ENCODE measurements at regions of chr20 and their contacts with region 1.

Region 1: DNA sequence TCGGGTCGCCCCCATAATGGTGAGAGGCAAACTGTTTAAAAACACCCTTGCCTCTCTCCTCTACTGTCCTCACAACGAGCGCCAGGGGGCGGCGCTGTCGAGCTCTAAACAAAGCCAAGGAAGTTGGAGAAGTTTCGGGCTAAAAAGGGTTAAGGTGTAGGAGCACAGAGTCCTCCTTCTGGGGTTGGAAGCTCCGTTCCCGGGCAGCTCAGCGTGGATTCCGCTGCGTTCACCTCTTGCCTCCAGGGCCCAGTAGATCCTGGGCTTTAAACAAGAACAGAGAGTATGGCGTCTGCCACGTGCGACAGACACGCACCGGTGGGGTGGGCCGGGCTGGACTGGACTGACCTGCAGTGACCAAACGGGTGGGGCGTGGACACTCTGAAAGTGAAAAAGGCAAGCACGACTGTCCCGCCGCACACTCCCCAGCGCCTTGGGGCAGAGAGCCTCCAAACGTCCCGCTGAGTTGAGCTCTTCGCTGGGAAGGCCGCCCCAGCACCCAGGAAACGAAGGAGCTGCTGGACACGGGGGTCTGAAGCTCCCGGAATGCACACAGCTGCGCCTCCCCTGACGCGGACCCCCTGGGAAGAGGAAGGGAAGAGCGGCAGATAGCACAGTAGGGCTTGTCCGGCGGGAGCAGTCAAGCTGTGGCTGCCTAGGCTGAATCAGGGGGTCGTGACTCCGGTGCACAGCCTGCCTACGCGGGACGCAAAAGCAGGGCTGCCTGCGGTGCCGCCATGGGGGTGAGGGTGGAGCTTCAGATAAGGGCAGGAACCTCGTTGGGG is 1.6 kb upstream of the THBD start:
- H3K4me3 Mint-ChIP-seq: peak overlapping the region; percentile 87
- H3K27ac Mint-ChIP-seq: peak overlapping the region; percentile 95
- H3K4me1 Mint-ChIP-seq: peaks cover 64% of the 10 kb centered on the region
- H3K27me3 Mint-ChIP-seq: peaks cover 46% of the 10 kb centered on the region

Region 2: DNA sequence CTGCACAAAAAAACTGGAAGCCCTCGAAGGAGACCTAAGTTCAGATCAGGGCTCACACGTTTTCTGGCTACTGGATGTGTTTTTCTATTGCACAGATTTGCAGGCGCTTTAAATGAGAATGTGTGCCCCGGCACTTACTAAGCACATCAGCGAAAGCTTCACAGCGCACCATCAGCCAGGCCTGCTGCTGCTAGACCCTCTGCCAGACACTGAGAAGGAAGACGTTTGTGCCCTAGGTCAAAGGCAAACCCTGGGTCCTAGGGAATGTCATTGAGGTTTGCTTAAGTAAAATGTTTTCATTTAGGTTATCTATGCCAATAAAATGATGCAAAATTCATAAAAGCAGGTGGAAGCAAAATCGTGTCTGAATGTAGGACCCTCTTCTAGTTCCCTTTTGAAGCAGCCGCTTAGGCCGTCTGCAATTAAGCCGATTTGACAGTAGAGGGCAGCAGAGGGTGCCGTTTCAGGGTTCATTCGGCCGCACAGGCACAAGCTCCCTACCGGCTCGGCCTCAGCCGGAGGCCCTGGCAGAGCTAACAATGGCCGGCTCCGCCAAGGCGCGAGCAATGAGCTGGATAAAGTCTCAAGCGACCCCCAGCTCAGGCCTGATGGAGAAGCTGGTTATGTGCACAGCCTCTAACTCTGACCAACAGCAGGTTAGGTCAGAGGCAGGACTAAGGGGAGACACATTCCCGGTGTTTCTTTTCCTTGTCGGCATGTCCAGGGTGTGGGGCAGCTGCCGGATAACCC is 359.5 kb before region 1 on chr20:
- intact Hi-C with region 1: loop called (anchors 10 kb)
- H3K4me3 Mint-ChIP-seq: no peak overlapping the region
- H3K27ac Mint-ChIP-seq: no peak overlapping the region
- H3K4me1 Mint-ChIP-seq: peaks cover 35% of the 10 kb centered on the region
- H3K27me3 Mint-ChIP-seq: no peaks in the 10 kb centered on the region

Region 3: GRCh38 chr20:22966787-22967464 is 84.1 kb before region 1 on chr20:
- intact Hi-C with region 1: no loop called
- H3K4me3 Mint-ChIP-seq: no peak overlapping the region
- H3K27ac Mint-ChIP-seq: no peak overlapping the region
- H3K4me1 Mint-ChIP-seq: no peaks in the 10 kb centered on the region
- H3K27me3 Mint-ChIP-seq: peaks cover 65% of the 10 kb centered on the region

Region 4: DNA sequence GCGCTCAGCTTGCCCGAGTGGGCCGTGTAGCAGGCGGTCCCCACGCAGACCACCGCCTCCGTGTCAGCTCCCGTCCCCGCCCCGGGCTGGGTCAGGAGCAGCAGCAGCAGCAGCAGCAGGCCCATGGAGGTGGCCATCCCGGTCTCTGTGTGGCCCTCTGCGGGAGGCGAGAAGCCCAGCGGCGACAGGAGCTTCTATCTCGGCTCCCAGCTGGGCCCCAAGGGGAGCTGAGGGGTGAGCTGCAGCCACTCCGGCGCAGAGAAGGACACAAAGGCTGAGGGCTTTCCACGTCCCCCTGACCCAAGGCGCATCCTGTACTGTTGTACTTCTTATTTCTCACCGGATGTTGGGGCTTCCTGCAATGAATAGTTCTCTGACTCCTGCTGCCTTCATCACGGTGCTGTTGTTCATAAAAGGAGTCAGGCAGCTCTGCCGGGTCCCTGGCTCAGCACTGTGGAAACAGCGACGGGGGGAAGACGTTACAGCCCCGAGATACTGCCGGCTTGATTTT is 35.1 kb after region 1 on chr20 and contains the start of gene CD93:
- intact Hi-C with region 1: loop called (anchors 5 kb)
- H3K4me3 Mint-ChIP-seq: peak within 1 kb of the TSS; percentile 79
- H3K27ac Mint-ChIP-seq: peak within 1 kb of the TSS; percentile 98
- H3K4me1 Mint-ChIP-seq: peaks cover 90% of the 10 kb centered on the region
- H3K27me3 Mint-ChIP-seq: no peaks in the 10 kb centered on the region

Region 5: DNA sequence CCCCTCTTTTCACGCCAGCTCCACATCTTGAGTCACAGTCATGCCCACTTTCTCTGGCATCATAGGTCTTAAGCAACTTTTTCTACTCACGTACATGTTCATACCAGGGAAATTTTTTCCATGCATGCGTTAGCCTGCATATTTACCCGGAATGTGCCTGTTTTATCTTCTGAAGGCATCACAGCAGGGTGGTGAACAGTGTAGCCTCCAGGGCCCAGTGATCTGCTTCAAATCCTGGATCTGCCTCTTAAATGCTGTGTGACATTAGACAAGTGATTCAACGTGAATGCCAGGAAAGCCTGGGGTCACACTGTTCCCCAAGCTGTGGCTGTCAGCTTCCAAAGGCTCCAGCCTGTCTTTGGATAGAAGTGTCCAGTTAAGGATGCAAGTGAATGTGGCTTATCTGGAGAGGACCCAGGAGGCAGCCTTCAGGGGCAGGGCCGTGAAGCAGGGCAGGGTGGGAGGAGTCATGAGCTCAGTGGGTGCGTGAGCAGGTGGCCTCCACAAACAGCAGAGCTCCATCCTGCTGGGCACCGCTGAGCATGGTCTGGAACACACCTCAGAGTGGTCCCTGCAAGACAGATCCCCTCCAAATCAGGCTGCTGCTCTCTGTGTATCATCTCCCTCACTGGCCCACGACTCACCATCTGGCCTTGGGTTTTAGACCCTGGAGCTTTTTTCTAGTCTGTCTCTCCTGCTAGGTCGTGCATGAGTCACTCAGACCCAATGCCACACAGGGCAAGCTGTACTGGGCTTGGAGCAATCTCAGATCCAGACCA is 65.5 kb after region 1 on chr20:
- intact Hi-C with region 1: loop called (anchors 10 kb)
- H3K4me3 Mint-ChIP-seq: peak overlapping the region; percentile 53
- H3K27ac Mint-ChIP-seq: peak overlapping the region; percentile 81
- H3K4me1 Mint-ChIP-seq: peaks cover 94% of the 10 kb centered on the region
- H3K27me3 Mint-ChIP-seq: peaks cover 5% of the 10 kb centered on the region

Region 6: DNA sequence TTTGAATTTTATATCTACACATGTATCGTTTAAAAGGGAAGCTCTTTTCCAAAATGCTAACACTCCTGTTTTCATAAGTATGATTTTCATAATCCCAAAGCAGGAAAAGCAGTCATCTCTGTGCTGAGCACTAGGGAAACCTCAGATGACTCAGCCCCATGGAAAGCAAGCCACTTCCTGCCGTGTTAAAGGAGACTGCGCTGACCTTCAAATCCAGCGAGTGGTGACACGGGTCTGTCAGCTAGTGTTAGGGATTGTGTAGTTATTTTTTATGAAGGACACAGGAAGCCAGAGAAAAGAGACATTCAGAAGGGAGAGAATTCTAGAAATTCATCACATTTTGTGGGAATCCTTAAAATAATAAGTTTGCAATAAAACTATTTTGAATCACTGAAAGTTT is 92.1 kb after region 1 on chr20:
- intact Hi-C with region 1: loop called (anchors 5 kb)
- H3K4me3 Mint-ChIP-seq: no peak overlapping the region
- H3K27ac Mint-ChIP-seq: peak overlapping the region; percentile 88
- H3K4me1 Mint-ChIP-seq: peaks cover 83% of the 10 kb centered on the region
- H3K27me3 Mint-ChIP-seq: no peaks in the 10 kb centered on the region

Region 7: GRCh38 chr20:23235173-23236027 is 184.4 kb after region 1 on chr20:
- intact Hi-C with region 1: loop called (anchors 1 kb)
- H3K4me3 Mint-ChIP-seq: no peak overlapping the region
- H3K27ac Mint-ChIP-seq: no peak overlapping the region
- H3K4me1 Mint-ChIP-seq: peaks cover 36% of the 10 kb centered on the region
- H3K27me3 Mint-ChIP-seq: peaks cover 25% of the 10 kb centered on the region

Region 8: GRCh38 chr20:23340524-23340923 is 289.5 kb after region 1 on chr20:
- intact Hi-C with region 1: loop called (anchors 5 kb)
- H3K4me3 Mint-ChIP-seq: no peak overlapping the region
- H3K27ac Mint-ChIP-seq: no peak overlapping the region
- H3K4me1 Mint-ChIP-seq: no peaks in the 10 kb centered on the region
- H3K27me3 Mint-ChIP-seq: peaks cover 11% of the 10 kb centered on the region